MCF 10A (cell line): ENCODE measurements at regions of chr5 and their contacts with region 1.

Region 1: GRCh38 chr5:149381987-149382340 is 2.9 kb upstream of the IL17B start:
- DNase-seq: peak; percentile 78
- H3K4me3 Mint-ChIP-seq: no peak overlapping the region
- H3K27ac Mint-ChIP-seq: no peak overlapping the region
- H3K4me1 Mint-ChIP-seq: no peaks in the 10 kb centered on the region
- H3K27me3 Mint-ChIP-seq: no peaks in the 10 kb centered on the region
- CTCF ChIP-seq: peak; percentile 97

Region 2: DNA sequence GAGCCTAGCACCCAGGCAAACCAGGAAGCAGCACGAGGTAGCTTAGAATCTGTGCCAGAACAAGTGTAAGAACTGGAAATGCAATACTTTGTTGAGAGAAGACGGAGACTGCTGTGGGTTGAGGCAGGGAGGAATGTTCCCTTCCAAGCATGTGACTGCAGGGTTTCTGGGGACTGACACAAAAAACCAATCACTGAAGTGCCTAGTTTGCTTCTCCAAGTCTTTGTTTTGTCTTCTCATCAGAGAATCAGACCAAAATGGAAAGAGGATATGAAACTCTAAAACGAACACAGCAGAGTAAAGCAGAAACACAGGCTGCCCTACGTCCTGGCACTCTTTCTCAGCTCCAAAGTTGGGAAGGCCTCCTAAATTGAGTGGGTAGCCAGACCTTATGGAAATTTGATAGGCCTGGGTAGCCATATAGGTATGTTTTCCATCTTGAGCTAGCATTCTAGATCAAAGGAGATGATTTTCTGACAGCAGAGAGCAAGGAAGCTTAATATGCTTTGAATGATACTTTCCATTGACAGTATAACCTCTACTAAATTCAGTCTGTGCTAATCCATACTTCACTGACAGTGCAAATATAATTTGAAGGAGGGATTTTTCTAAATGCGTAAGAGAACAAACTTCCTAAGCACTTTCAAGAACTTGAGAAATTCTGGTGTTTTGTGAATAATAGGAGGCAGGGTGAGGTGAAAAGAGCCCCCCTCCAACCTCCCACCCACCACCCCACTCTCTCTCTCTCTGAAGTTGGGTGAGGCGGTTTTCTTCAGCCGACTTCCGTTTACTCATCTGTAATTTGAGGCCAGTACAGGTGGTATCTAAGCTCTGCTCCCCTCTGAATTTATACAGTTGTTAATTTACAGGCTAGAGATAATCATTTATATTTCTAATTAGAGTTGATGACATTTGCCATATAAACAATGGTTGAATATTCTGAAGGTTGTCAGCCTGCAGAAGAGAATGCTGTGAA is 550.1 kb before region 1 on chr5:
- CTCF ChIA-PET with region 1: no interaction called
- POLR2A ChIA-PET with region 1: no interaction called
- intact Hi-C with region 1: no loop called
- DNase-seq: no peak
- H3K4me3 Mint-ChIP-seq: peak overlapping the region; percentile 90
- H3K27ac Mint-ChIP-seq: peak overlapping the region; percentile 69
- H3K4me1 Mint-ChIP-seq: peaks cover 87% of the 10 kb centered on the region
- H3K27me3 Mint-ChIP-seq: no peaks in the 10 kb centered on the region
- CTCF ChIP-seq: no peak

Region 3: DNA sequence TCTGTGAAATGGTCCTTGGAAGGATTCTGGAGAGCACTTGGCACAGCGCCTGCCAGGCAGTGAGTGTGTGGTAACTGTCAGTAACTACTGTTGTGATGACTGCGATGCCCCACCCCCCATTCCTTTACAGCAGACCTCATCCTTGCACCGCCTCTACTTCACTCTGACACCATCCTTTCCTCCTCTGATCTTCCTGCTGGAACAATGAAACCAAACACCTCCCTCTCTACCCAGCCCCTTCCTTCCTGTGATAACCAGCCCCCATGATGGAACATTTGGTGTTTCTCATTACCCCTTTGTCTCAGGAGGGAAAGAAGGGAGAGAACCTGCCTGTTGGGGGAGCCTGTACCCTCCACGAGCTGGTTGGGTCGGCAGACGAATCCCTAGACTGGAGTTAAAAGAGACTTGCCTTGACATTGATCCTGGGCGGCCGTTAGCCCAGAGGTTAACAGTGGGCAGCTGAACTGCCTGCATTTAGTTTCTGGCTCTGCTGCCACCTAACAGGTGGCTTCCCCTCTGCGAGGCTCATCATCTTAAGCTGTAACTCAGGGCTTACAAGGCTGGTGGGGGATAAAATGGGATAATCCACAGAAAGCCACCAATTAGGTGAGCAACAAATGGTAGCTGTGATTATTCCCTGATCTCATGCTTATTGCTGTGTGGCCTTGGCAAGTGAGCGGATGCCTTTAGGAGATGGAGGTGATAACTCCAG is 70.9 kb before region 1 on chr5:
- CTCF ChIA-PET with region 1: interaction called, 1,231 read pairs
- POLR2A ChIA-PET with region 1: no interaction called
- intact Hi-C with region 1: no loop called
- DNase-seq: peak; percentile 50
- H3K4me3 Mint-ChIP-seq: no peak overlapping the region
- H3K27ac Mint-ChIP-seq: no peak overlapping the region
- H3K4me1 Mint-ChIP-seq: peaks cover 5% of the 10 kb centered on the region
- H3K27me3 Mint-ChIP-seq: no peaks in the 10 kb centered on the region
- CTCF ChIP-seq: no peak

Region 4: GRCh38 chr5:149317281-149318048 is 64.5 kb before region 1 on chr5:
- CTCF ChIA-PET with region 1: interaction called, 1,231 read pairs
- POLR2A ChIA-PET with region 1: no interaction called
- intact Hi-C with region 1: no loop called
- DNase-seq: peak; percentile 71
- H3K4me3 Mint-ChIP-seq: no peak overlapping the region
- H3K27ac Mint-ChIP-seq: no peak overlapping the region
- H3K4me1 Mint-ChIP-seq: peaks cover 12% of the 10 kb centered on the region
- H3K27me3 Mint-ChIP-seq: no peaks in the 10 kb centered on the region
- CTCF ChIP-seq: peak; percentile 78

Region 5: DNA sequence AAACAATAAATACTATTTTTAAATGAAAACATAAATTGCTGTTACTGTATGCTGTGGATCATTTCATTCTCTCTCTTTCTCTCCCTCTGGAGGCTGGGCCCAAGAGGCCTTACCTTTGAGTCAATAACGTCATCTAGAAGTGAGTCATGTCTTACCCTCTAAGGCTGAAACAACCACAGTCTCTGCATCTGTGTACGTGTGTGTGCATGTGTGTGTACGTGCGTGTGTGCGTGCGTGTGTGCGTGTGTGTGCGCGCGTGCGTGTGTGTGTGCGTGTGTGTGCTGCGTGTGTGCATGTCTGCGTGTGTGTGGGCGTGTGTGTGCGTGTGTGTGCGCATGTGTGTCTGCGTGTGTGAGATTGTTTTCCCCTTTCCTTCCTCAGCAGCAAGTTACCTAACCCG is 10.8 kb after region 1 on chr5:
- CTCF ChIA-PET with region 1: interaction called, 46 read pairs
- POLR2A ChIA-PET with region 1: interaction called, 3 read pairs
- intact Hi-C with region 1: no loop called
- DNase-seq: peak; percentile 66
- H3K4me3 Mint-ChIP-seq: no peak overlapping the region
- H3K27ac Mint-ChIP-seq: no peak overlapping the region
- H3K4me1 Mint-ChIP-seq: no peaks in the 10 kb centered on the region
- H3K27me3 Mint-ChIP-seq: no peaks in the 10 kb centered on the region
- CTCF ChIP-seq: no peak

Region 6: DNA sequence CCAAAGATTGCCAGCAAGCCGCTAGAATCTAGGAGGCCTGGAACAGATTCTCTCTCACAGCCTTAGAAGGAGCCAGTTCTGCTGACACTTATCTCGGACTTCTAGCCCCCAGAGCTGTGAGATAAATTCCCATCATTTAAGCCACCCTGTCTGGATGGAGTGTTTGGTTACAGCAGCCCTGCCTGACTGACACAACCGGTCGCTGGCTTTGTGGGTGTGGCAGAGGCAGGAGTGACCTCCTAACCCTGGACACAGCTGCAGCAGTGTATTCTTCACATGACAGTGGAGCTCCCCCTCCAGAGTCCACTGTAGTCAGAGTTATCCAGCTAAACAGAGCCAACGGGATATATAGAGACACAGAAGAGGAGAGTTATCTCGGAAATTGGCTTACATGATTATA is 18.3 kb after region 1 on chr5:
- CTCF ChIA-PET with region 1: interaction called, 36 read pairs
- POLR2A ChIA-PET with region 1: no interaction called
- intact Hi-C with region 1: no loop called
- DNase-seq: no peak
- H3K4me3 Mint-ChIP-seq: no peak overlapping the region
- H3K27ac Mint-ChIP-seq: no peak overlapping the region
- H3K4me1 Mint-ChIP-seq: no peaks in the 10 kb centered on the region
- H3K27me3 Mint-ChIP-seq: no peaks in the 10 kb centered on the region
- CTCF ChIP-seq: no peak

Region 7: DNA sequence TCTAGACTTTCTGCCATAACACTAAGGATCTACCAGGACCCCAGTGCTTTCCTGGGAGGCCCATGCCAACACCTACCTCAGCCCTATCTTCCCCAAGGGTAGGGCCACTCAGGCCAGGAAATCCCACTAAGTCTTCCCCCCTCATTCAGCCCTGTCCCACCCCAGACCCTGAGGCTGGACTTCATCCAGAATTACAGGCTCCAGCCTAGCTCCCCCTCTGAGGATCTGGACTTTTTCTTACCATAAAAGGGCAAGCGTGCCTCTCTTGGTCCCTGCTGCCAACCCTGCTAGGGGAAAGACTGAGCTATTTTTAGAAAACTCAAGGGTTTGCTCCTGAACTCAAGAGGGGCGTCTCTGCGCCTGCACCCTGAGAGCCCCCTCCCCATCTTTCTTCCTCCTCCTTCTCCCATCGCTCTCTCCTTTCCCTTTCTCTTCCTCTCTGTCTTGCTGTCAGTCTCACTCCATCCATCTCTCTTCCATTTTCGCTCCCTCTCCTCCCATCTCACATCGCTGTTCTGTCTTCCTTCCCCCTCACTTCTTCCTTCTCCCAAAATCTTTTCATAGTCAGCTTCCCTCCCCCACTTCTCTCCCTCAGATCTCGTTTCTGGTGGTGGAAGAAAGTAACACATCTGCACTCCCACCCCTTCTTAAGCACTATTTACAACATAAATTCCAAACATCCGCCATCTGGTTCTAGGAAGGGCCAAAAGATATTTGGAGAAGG is 35.2 kb after region 1 on chr5:
- CTCF ChIA-PET with region 1: interaction called, 20 read pairs
- POLR2A ChIA-PET with region 1: no interaction called
- intact Hi-C with region 1: no loop called
- DNase-seq: no peak
- H3K4me3 Mint-ChIP-seq: no peak overlapping the region
- H3K27ac Mint-ChIP-seq: no peak overlapping the region
- H3K4me1 Mint-ChIP-seq: no peaks in the 10 kb centered on the region
- H3K27me3 Mint-ChIP-seq: peaks cover 18% of the 10 kb centered on the region
- CTCF ChIP-seq: no peak

Region 8: DNA sequence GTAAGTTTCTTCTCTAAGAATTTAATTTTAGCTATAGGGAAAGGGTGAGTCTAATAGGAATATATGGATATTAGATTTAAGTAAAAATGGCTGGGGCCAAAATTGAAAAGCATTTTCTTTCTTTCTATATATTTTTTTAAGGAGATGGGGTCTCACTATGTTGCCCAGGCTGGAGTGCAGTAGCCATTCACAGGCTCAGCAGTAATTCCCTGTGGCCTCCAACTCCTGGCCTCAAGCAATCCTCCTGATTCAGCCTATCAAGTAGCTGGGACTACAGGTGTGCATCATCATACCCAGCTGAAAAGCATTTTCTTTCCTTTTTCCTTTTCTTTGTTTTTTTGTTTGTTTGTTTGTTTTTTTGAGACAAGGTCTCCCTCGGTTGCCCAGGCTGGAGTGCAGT is 128.2 kb after region 1 on chr5:
- CTCF ChIA-PET with region 1: interaction called, 13 read pairs
- POLR2A ChIA-PET with region 1: interaction called, 4 read pairs
- intact Hi-C with region 1: no loop called
- DNase-seq: no peak
- H3K4me3 Mint-ChIP-seq: no peak overlapping the region
- H3K27ac Mint-ChIP-seq: no peak overlapping the region
- H3K4me1 Mint-ChIP-seq: peaks cover 8% of the 10 kb centered on the region
- H3K27me3 Mint-ChIP-seq: no peaks in the 10 kb centered on the region
- CTCF ChIP-seq: no peak